Left ventricle myocardium superior (tissue), 1 donor: ENCODE measurements at regions of chr12 and their contacts with region 1.

Region 1: GRCh38 chr12:15268927-15269552 is 47.8 kb upstream of the RERG start:
- DNase-seq: no peak
- ATAC-seq: peak; percentile 57

Region 2: DNA sequence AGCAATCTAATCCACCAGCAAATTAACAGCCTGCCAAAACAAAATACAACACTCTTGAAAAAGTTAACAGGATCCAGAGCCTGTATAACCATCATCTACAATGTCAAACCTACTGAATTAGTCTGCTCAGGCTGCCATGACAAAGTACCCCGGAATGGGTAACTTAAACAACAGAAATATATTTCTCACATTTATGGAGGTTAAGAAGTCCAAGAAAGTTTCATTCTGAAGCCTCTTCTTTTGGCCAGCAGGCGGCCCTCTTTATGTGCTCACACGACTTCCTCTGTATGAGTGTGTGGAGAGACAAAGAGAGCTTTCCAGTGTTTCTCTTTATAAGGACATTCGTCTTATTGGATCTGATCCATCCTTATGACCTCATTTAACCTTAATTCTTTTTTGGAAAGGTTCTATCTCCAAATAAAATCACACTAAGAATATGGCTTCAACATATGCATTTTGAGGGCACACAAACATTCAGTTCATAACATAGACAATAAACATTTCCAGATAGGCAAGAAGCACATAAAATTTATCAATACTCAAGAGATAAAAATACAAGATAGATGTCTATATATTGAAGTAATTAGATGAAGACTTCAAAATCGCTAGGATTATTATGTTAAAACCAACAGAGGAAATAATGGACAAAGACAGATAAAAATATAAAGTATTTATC is 41.9 kb before region 1 on chr12:
- intact Hi-C with region 1: loop called (anchors 5 kb)
- DNase-seq: peak; percentile 65
- ATAC-seq: peak; percentile 57

Region 3: GRCh38 chr12:15306605-15307004 is 37.6 kb after region 1 on chr12:
- intact Hi-C with region 1: no loop called
- DNase-seq: no peak
- ATAC-seq: no peak